PC-9 (cell line): ENCODE measurements at regions of chr1 and their contacts with region 1.

Region 1: DNA sequence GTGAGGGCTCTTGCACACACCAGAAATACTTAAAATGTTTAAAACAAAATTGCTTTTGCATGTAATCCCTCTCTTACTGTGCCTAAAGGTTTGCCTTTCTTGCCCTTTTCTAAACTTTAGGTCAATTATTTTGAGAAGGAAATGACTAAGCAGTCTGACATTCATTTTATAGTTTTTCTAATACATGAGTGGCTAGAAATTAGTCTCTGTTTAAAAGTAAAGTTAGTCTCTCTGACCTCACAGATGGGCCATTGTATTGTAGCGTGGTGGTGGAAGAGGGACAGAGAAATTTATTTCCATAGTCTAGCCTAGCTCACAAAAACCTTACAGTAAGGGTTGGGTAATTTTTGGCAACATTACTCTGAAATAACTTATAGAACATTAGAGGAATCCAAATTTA is 3.6 kb upstream of the COL11A1 start:
- DNase-seq: no peak
- H3K4me3 ChIP-seq: no peak overlapping the region
- H3K27ac ChIP-seq: no peak overlapping the region
- H3K4me1 ChIP-seq: no peaks in the 10 kb centered on the region
- H3K27me3 ChIP-seq: no peaks in the 10 kb centered on the region
- CTCF ChIP-seq: no peak

Region 2: DNA sequence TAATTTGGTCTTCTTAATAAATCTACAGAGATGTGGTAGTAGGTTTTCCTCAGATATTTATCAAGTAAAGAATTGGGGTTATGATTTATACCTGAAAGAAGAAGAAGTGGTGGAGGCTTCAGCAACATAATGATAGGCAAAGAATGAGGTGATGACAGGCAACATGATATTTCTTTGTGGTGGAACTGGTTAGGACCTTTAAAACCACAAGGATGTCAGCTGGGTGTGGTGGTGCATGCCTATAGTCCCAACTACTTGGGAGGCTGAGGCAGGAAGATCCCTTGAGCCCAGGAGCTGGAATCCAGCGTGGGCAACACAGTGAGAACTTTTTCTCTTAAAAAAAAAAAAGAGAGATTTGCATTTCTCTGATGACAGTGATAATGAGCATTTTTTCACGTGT is 30.5 kb after region 1 on chr1:
- CTCF ChIA-PET with region 1: interaction called, 9 read pairs
- POLR2A ChIA-PET with region 1: no interaction called
- intact Hi-C with region 1: loop called (anchors 1 kb)
- DNase-seq: no peak
- H3K4me3 ChIP-seq: no peak overlapping the region
- H3K27ac ChIP-seq: no peak overlapping the region
- H3K4me1 ChIP-seq: no peaks in the 10 kb centered on the region
- H3K27me3 ChIP-seq: no peaks in the 10 kb centered on the region
- CTCF ChIP-seq: no peak

Region 3: GRCh38 chr1:103790172-103790571 is 678.2 kb after region 1 on chr1:
- CTCF ChIA-PET with region 1: no interaction called
- POLR2A ChIA-PET with region 1: no interaction called
- intact Hi-C with region 1: no loop called
- DNase-seq: no peak
- H3K4me3 ChIP-seq: no peak overlapping the region
- H3K27ac ChIP-seq: no peak overlapping the region
- H3K4me1 ChIP-seq: no peaks in the 10 kb centered on the region
- H3K27me3 ChIP-seq: no peaks in the 10 kb centered on the region
- CTCF ChIP-seq: no peak